ENCODE measurements at regions of chr3 and their contacts with region 1.

Region 1: DNA sequence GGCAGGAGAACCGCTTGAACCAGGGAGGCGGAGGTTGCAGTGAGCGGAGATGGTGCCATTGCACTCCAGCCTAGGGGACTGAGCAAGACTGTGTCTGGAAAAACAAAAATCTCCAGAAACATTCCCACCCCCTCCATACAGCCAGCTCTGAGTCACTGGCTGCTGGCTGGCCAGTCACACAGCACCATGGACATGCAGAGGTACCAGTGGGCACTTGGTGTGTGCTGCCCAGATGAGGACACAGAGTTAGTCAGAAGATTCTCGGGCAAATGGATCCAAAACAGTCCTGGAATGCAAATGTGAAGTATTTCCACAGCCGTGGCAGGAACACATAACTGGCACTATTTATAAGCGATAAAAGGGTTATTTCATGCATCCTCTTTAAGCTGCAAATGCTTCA is 44.6 kb downstream of the BDH1 start:
- DNase-seq: no peak
- ATAC-seq: no peak
- H3K4me3 ChIP-seq: no peak overlapping the region
- H3K27ac ChIP-seq: no peak overlapping the region
- H3K4me1 ChIP-seq: peaks cover 5% of the 10 kb centered on the region
- H3K27me3 ChIP-seq: no peaks in the 10 kb centered on the region
- CTCF ChIP-seq: no peak
- POLR2A ChIP-seq: no peak

Region 2: DNA sequence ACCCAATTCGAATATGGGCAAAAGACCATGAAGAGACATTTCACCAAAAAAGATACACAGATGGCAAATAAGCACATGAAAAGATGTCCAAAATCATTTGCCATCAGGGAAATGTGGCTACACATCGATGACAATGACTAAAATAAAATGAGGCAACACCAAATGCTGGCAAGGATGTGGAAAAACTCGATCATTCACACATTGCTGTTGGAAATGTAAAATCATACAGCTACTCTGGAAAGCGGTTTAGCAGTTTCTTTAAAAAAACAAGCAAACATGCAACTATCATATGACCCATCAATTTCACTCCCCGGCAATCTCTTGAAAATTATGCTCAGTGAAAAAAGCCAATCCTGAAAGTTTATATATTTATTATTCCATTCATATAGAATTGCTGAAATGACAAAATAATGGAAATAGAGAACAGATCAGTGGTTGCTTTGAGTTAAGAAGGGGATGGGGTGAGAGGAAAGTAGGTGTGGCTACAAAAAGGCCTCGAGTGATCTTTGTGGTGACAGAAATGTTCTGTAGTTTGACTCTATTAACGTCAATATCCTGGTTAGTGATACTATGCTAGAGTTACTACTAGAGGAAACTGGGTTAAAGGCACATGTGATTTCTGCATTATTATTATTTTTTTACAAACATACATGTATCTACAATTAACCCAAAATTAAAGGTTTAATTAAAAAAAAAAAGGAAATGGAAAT is 257.7 kb before region 1 on chr3:
- intact Hi-C with region 1: loop called (anchors 5 kb)
- DNase-seq: no peak
- ATAC-seq: no peak
- H3K4me3 ChIP-seq: no peak overlapping the region
- H3K27ac ChIP-seq: no peak overlapping the region
- H3K4me1 ChIP-seq: no peaks in the 10 kb centered on the region
- H3K27me3 ChIP-seq: no peaks in the 10 kb centered on the region
- CTCF ChIP-seq: no peak
- POLR2A ChIP-seq: no peak

Region 3: GRCh38 chr3:197394464-197395321 is 116.4 kb before region 1 on chr3:
- intact Hi-C with region 1: no loop called
- DNase-seq: peak in 1 of 4 donors; percentile 22
- ATAC-seq: no peak
- H3K4me3 ChIP-seq: no peak overlapping the region
- H3K27ac ChIP-seq: no peak overlapping the region
- H3K4me1 ChIP-seq: no peaks in the 10 kb centered on the region
- H3K27me3 ChIP-seq: no peaks in the 10 kb centered on the region
- CTCF ChIP-seq: no peak
- POLR2A ChIP-seq: no peak